ENCODE measurements at regions of chr11 and their contacts with region 1.

Region 1: DNA sequence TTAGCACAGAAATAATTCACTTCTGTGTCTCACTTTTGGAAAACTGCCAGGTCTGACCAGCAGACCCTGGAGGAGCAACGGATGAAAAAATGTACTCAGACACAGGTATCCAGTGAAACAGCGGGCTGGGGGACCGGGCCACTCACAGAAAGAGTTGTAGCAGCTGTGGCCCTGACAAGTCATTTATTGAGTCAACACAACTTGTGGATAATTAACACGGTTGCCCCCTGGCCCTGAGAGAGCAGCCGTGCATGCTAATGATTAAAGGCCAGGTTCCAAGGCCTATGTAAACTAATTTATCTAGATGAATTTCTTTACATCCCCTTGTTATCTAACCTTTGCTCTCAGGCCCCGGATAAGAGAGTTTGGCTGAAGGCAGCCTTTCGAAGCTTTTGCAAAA is 131.3 kb downstream of the AASDHPPT start:
- DNase-seq: peak; percentile 85 to 95
- H3K4me3 ChIP-seq: no peak overlapping the region
- H3K4me3 Mint-ChIP-seq: peak overlapping the region; percentile 7
- H3K27ac Mint-ChIP-seq: peak overlapping the region; percentile 67
- H3K4me1 ChIP-seq: peaks cover 29% of the 10 kb centered on the region
- H3K4me1 Mint-ChIP-seq: peaks cover 27% of the 10 kb centered on the region
- H3K27me3 ChIP-seq: no peaks in the 10 kb centered on the region
- H3K27me3 Mint-ChIP-seq: no peaks in the 10 kb centered on the region
- CTCF ChIP-seq: no peak

Region 2: GRCh38 chr11:106105986-106106385 is 102.8 kb before region 1 on chr11:
- CTCF ChIA-PET with region 1: no interaction called
- POLR2A ChIA-PET with region 1: no interaction called
- intact Hi-C with region 1: no loop called
- DNase-seq: no peak
- H3K4me3 ChIP-seq: no peak overlapping the region
- H3K4me3 Mint-ChIP-seq: no peak overlapping the region
- H3K27ac Mint-ChIP-seq: no peak overlapping the region
- H3K4me1 ChIP-seq: no peaks in the 10 kb centered on the region
- H3K4me1 Mint-ChIP-seq: no peaks in the 10 kb centered on the region
- H3K27me3 ChIP-seq: no peaks in the 10 kb centered on the region
- H3K27me3 Mint-ChIP-seq: no peaks in the 10 kb centered on the region
- CTCF ChIP-seq: peak in 1 of 2 experiments; percentile 9

Region 3: DNA sequence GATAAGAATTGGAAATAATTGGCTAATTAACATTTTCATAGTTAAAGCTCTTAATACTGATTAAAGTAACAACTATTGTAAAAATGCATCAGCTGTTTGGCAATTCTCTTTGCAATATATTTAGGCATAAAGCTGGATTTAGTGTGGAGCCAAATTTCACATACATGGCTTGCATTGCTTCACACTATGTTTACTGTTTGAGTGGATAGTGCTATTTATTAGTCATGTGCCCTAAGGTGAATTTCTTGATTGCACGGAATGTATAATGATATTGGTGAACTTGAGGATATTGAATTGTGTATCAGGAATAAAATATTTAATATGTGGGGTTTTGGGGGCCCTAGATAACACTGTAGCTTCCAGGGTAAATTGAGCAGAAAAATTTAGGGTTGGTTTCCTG is 30.4 kb before region 1 on chr11:
- CTCF ChIA-PET with region 1: interaction called, 4 read pairs
- POLR2A ChIA-PET with region 1: no interaction called
- intact Hi-C with region 1: loop called (anchors 1 kb)
- DNase-seq: no peak
- H3K4me3 ChIP-seq: no peak overlapping the region
- H3K4me3 Mint-ChIP-seq: no peak overlapping the region
- H3K27ac Mint-ChIP-seq: no peak overlapping the region
- H3K4me1 ChIP-seq: peaks cover 11% of the 10 kb centered on the region; the same call in 1 of the 2 replicates
- H3K4me1 Mint-ChIP-seq: peaks cover 7% of the 10 kb centered on the region
- H3K27me3 ChIP-seq: no peaks in the 10 kb centered on the region
- H3K27me3 Mint-ChIP-seq: no peaks in the 10 kb centered on the region
- CTCF ChIP-seq: no peak